ENCODE measurements at regions of chr1 and their contacts with region 1.

Region 1: GRCh38 chr1:74455390-74455789 is 57.0 kb downstream of the LRRC53 start:
- DNase-seq: no peak
- H3K4me3 ChIP-seq: no peak overlapping the region
- H3K27ac ChIP-seq: no peak overlapping the region
- H3K4me1 ChIP-seq: no peaks in the 10 kb centered on the region
- H3K27me3 ChIP-seq: no peaks in the 10 kb centered on the region
- CTCF ChIP-seq: no peak
- EP300 ChIP-seq: no peak
- POLR2A ChIP-seq: no peak

Region 2: GRCh38 chr1:74245168-74245772 is 210.1 kb before region 1 on chr1:
- in situ Hi-C with region 1: no loop called
- intact Hi-C with region 1: no loop called
- DNase-seq: no peak
- H3K4me3 ChIP-seq: no peak overlapping the region
- H3K27ac ChIP-seq: no peak overlapping the region
- H3K4me1 ChIP-seq: no peaks in the 10 kb centered on the region
- H3K27me3 ChIP-seq: no peaks in the 10 kb centered on the region
- CTCF ChIP-seq: no peak
- EP300 ChIP-seq: no peak
- POLR2A ChIP-seq: no peak

Region 3: GRCh38 chr1:74323937-74324473 is 131.4 kb before region 1 on chr1:
- in situ Hi-C with region 1: no loop called
- intact Hi-C with region 1: no loop called
- DNase-seq: no peak
- H3K4me3 ChIP-seq: no peak overlapping the region
- H3K27ac ChIP-seq: no peak overlapping the region
- H3K4me1 ChIP-seq: no peaks in the 10 kb centered on the region
- H3K27me3 ChIP-seq: no peaks in the 10 kb centered on the region
- CTCF ChIP-seq: no peak
- EP300 ChIP-seq: no peak
- POLR2A ChIP-seq: no peak

Region 4: DNA sequence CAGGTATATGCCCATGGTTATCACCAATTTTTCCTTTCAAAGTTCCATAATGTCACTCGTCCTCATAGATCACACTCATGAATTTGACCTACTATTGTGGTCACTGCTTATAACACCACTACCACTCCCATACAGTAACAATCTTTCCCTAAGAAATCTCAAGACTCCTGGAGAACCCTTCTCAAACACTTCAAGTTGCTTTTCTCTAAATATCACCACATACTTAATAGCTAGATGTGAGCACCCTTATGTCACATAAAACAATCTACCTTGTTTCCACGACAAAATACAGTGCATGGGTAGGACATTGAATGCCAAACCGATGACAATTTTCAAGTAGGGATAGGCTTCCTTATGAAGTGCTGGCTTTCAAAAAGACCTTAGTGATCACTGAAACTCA is 47.5 kb before region 1 on chr1:
- in situ Hi-C with region 1: no loop called
- intact Hi-C with region 1: loop called (anchors 2 kb)
- DNase-seq: no peak
- H3K4me3 ChIP-seq: no peak overlapping the region
- H3K27ac ChIP-seq: no peak overlapping the region
- H3K4me1 ChIP-seq: no peaks in the 10 kb centered on the region
- H3K27me3 ChIP-seq: no peaks in the 10 kb centered on the region
- CTCF ChIP-seq: no peak
- EP300 ChIP-seq: no peak
- POLR2A ChIP-seq: no peak

Region 5: GRCh38 chr1:75338616-75339483 is 883.5 kb after region 1 on chr1:
- in situ Hi-C with region 1: no loop called
- intact Hi-C with region 1: no loop called
- DNase-seq: no peak
- H3K4me3 ChIP-seq: no peak overlapping the region
- H3K27ac ChIP-seq: no peak overlapping the region
- H3K4me1 ChIP-seq: no peaks in the 10 kb centered on the region
- H3K27me3 ChIP-seq: no peaks in the 10 kb centered on the region
- CTCF ChIP-seq: no peak
- EP300 ChIP-seq: no peak
- POLR2A ChIP-seq: no peak

Measured in transverse colon (tissue), 4 donors.